Heart right ventricle (tissue), 16 donors: ENCODE measurements at regions of chr1 and their contacts with region 1.

Region 1: DNA sequence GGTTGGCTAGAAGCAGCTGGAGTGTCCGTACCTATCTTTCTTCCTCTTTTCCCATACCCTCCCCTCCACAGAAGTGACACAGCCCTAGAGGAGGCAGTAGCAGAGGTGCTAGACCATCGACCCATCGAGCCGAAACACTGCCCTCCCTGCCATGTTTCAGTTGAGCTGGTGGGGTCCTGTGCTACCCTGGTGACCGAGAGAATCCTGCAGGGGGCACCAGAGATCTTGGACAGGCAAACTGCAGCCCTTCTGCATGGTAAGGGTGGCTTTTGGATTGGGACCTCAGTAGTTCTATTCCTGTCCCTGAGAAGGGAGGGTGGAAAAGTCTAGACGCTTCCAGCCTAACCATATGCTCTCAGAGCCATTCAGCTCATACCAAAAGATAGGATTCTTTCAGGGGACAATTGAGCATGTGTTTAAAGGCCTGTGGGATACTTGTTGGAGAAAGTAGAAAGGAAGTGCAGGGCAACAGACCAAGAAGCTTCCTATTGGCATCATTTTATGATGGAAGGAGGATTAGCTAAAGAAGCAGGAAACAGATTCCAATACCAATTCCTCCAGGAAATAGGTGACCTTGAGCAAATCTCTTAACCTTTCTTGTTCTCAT is 11.7 kb upstream of the BNIPL start:
- DNase-seq: peak; percentile 76 to 91
- ATAC-seq: peak; percentile 88 to 94 (median 90)
- H3K4me3 ChIP-seq: no peak overlapping the region
- H3K27ac ChIP-seq: peak overlapping the region; percentile 13 to 93 (median 83)
- H3K4me1 ChIP-seq: peaks cover 3 to 19% (median 12%) of the 10 kb centered on the region in 9 donors
- H3K27me3 ChIP-seq: no peaks in the 10 kb centered on the region
- CTCF ChIP-seq: peak; percentile 56 to 85 (median 74)

Region 2: GRCh38 chr1:150441121-150441520 is 583.5 kb before region 1 on chr1:
- intact Hi-C with region 1: no loop called
- DNase-seq: no peak
- ATAC-seq: no peak
- H3K4me3 ChIP-seq: no peak overlapping the region
- H3K27ac ChIP-seq: no peak overlapping the region
- H3K4me1 ChIP-seq: no peaks in the 10 kb centered on the region
- H3K27me3 ChIP-seq: no peaks in the 10 kb centered on the region
- CTCF ChIP-seq: no peak

Region 3: DNA sequence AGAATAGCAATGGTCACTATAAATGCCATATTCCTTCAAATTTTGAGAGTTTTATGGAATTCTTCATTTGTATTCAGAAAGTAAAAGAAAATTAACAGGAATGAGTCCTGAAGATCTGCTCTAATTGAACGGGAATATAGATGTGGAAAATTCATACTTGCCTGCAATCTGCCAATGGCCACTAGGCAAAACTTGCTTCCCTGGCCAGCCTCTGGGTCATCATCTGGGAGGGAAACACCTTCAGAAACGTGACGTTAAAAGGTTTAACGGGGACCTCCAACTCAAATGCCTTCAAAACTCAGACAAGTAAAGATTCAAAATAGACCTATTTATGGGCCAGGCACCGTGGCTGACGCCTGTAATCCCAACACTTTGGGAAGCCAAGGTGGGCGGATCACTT is 194.9 kb before region 1 on chr1:
- intact Hi-C with region 1: no loop called
- DNase-seq: no peak
- ATAC-seq: no peak
- H3K4me3 ChIP-seq: no peak overlapping the region
- H3K27ac ChIP-seq: no peak overlapping the region
- H3K4me1 ChIP-seq: no peaks in the 10 kb centered on the region
- H3K27me3 ChIP-seq: no peaks in the 10 kb centered on the region
- CTCF ChIP-seq: peak in 1 of 9 donors; percentile 28

Region 4: DNA sequence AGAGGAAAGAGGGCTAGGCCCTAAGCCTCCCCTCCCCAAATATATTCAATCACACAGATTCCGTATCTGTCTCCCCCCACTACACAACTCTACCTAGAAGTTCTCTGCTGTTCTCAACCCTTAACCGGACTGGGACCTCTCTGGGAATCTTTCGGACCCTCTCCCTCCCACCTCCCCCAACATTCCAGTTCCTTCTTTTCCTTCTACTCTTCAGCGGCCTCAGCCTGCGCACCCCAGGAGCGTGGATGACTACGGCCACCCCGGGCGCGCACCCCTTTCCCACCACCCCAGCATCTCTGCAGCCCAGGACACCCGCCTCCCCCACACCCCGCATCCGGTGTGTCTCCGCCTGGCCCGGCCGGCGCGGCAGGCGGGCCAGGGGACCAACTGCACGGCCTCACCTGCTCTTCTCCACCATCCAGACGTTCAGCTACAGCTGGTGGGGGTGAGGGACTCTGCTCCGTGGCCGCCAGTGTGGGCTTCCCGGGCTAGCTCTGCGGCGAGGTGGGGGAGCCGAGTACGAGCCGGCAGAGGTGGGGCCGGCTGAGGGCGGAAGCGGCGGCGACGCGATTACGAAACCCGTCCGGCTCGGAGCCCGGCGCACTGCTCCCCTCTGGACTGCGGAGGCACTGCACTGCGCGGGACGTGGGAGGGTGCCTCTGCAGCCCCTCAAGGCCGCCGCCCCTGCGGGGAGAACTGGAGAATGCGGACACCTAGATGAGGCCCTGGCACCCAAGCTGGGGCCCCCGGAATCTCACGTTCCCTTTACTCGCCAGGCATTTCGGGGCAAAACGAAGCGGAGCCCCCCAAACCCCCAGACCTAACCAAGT is 34.6 kb after region 1 on chr1 and contains the start of gene CDC42SE1:
- intact Hi-C with region 1: loop called in 2 of 10 experiments (anchors 5 kb)
- DNase-seq: peak; percentile 84 to 87
- ATAC-seq: peak; percentile 93 to 96 (median 94)
- H3K4me3 ChIP-seq: peak within 1 kb of the TSS; percentile 47 to 93 (median 79)
- H3K27ac ChIP-seq: peak within 1 kb of the TSS; percentile 80 to 100 (median 97)
- H3K4me1 ChIP-seq: peaks cover 16 to 67% (median 39%) of the 10 kb centered on the region in 9 donors
- H3K27me3 ChIP-seq: no peaks in the 10 kb centered on the region
- CTCF ChIP-seq: peak; percentile 63 to 95 (median 89)
- total RNA-seq, gene CDC42SE1: 26.1 to 45.6 (median 30.5) TPM

Region 5: GRCh38 chr1:151070474-151071276 is 46.0 kb after region 1 on chr1 and contains the start of gene GABPB2:
- intact Hi-C with region 1: loop called in 4 of 10 experiments (anchors 1 to 10 kb)
- DNase-seq: peak; percentile 93 to 96
- ATAC-seq: peak; percentile 92 to 97 (median 96)
- H3K4me3 ChIP-seq: peak within 1 kb of the TSS; percentile 51 to 95 (median 78)
- H3K27ac ChIP-seq: peak within 1 kb of the TSS; percentile 96 to 100 (median 99)
- H3K4me1 ChIP-seq: peaks cover 4 to 29% (median 20%) of the 10 kb centered on the region in 9 donors
- H3K27me3 ChIP-seq: no peaks in the 10 kb centered on the region
- CTCF ChIP-seq: peak in 8 of 9 donors; percentile 91 to 98 (median 94)
- total RNA-seq, gene GABPB2: 9.1 to 14.4 (median 10.6) TPM

Region 6: DNA sequence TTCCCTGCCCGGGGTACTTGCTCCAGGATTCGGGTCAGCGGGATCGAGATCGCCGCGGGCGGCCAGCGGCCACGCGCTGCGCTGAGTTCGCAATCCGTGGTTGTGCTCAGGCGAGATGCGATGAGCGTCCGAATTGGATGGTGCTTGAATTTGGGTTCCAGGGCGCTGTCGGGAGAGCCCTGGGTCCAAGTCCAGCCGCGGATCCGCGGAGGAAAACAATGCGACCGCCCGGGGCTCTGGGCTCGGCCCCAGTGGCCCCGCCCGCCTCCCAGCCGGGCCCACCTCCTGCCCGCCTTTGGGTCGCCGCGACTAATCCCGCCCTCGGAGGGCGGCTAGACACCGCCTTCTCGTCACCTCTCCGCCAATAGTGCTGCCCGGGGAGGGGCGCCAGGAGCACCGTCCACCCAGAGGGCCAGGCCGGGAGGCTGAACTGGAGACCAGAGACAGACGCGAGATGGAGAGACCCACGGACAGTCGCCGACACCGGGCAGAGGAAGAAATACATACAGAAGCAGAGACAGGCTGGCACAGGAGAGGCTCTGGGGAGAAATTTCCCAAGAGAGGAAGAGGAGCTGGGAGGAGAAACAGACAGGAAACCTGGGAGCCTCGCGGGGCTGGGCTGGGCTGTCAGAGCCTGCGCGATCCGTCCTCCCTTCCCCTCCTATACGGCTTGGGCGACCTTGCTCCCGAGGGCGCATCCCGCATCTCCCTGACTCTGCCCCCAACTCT is 121.9 kb after region 1 on chr1 and contains the start of gene SEMA6C:
- intact Hi-C with region 1: loop called in 2 of 10 experiments (anchors 5 to 10 kb)
- DNase-seq: peak; percentile 96 to 97
- ATAC-seq: peak; percentile 92 to 95 (median 94)
- H3K4me3 ChIP-seq: peak within 1 kb of the TSS; percentile 83 to 100 (median 94)
- H3K27ac ChIP-seq: peak within 1 kb of the TSS; percentile 82 to 96 (median 89)
- H3K4me1 ChIP-seq: peaks cover 21 to 58% (median 46%) of the 10 kb centered on the region in 9 donors
- H3K27me3 ChIP-seq: peaks cover 0 to 15% (median 0%) of the 10 kb centered on the region in 7 donors
- CTCF ChIP-seq: no peak
- total RNA-seq, gene SEMA6C: 23.2 to 68.1 (median 54.9) TPM

Region 7: GRCh38 chr1:151156515-151156819 is 131.8 kb after region 1 on chr1 and contains the start of gene TNFAIP8L2:
- intact Hi-C with region 1: loop called in 4 of 10 experiments (anchors 2 to 10 kb)
- DNase-seq: peak in 1 of 2 donors; percentile 53
- ATAC-seq: peak; percentile 39 to 71 (median 58)
- H3K4me3 ChIP-seq: peak within 1 kb of the TSS in 7 of 10 donors; percentile 8 to 58 (median 32)
- H3K27ac ChIP-seq: peak within 1 kb of the TSS in 5 of 10 donors; percentile 13 to 90 (median 48)
- H3K4me1 ChIP-seq: peaks cover 0 to 45% (median 5%) of the 10 kb centered on the region in 9 donors
- H3K27me3 ChIP-seq: no peaks in the 10 kb centered on the region
- CTCF ChIP-seq: no peak
- total RNA-seq, gene TNFAIP8L2: 0.35 to 5.8 (median 0.71) TPM in 9 of 10 donors, not detected in the other

Region 8: DNA sequence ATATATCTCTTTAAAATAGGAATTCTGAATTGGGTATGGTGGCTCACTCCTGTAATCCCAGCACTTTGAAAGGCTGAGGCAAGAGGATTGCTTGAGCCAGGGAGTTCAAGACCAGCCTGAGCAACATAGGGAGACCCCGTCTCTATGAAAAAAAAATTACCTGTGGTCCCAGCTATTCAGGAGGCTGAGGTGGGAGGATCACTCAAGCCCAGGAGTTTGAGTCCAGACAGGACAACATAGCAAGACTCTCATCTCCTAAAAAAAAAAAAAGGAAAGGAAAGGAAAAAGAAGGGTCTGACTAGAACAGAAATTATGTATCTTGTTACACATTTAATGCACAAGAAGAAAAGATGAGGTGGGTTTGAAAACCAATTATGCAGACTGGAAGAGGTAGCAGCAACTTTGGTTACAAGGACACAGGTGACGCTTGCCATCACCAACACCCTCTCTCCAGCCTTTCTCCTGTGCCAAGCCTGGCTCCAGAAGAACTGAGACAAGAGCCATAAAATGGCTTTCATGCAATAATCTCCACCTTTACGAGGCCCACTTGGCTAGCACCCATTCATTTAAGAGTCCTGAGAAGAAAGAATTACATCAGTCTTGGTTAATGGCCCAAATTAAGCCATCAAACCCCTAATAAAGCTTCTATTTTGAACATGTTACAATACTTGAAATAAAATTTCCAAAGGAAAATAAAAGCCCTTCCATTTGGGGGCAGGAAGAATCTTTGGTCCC is 352.7 kb after region 1 on chr1:
- intact Hi-C with region 1: no loop called
- DNase-seq: no peak
- ATAC-seq: no peak
- H3K4me3 ChIP-seq: no peak overlapping the region
- H3K27ac ChIP-seq: no peak overlapping the region
- H3K4me1 ChIP-seq: peaks cover 0 to 11% (median 6%) of the 10 kb centered on the region in 9 donors
- H3K27me3 ChIP-seq: no peaks in the 10 kb centered on the region
- CTCF ChIP-seq: no peak